Natural killer cell (primary cell): ENCODE measurements at regions of chr7 and their contacts with region 1.

Region 1: DNA sequence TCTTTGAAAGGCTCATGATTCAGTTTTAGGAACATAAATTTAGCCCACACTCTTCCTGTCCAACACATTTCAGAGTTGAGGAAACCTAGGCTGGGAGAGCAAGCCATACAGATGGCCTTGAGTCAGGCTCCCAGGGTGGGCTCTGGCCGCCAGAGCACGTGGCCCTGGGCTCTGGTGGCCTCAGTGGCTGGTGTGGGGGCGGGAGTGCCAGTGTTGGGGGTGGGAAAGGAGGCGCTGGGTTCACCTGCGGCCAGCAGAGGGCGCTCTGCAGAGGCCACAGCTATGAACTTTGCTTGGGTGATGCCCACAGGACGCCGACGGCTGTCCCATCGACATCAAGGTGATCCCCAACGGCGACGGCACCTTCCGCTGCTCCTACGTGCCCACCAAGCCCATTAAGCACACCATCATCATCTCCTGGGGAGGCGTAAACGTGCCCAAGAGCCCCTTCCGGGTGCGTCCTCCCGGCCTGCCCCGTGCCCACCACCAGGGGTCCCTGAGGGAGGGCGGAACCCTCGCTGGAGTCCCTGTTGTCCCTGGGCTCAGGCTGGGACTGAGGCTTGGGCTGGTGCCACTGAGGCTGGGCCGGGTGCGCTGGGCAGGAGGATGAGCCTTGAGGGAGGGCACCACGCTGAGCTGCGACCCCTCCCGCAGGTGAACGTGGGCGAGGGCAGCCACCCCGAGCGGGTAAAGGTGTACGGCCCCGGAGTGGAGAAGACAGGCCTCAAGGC is 11.9 kb downstream of the FLNC start:
- DNase-seq: peak; percentile 51 to 79
- ATAC-seq: peak; percentile 58 to 86 (median 84)
- H3K4me3 ChIP-seq: no peak overlapping the region
- H3K4me3 Mint-ChIP-seq: peak overlapping the region; percentile 50
- H3K27ac ChIP-seq: no peak overlapping the region
- H3K27ac Mint-ChIP-seq: no peak overlapping the region
- H3K4me1 ChIP-seq: peaks cover 3% of the 10 kb centered on the region
- H3K4me1 Mint-ChIP-seq: no peaks in the 10 kb centered on the region
- H3K27me3 ChIP-seq: no peaks in the 10 kb centered on the region
- H3K27me3 Mint-ChIP-seq: no peaks in the 10 kb centered on the region
- CTCF ChIP-seq: peak; percentile 70

Region 2: DNA sequence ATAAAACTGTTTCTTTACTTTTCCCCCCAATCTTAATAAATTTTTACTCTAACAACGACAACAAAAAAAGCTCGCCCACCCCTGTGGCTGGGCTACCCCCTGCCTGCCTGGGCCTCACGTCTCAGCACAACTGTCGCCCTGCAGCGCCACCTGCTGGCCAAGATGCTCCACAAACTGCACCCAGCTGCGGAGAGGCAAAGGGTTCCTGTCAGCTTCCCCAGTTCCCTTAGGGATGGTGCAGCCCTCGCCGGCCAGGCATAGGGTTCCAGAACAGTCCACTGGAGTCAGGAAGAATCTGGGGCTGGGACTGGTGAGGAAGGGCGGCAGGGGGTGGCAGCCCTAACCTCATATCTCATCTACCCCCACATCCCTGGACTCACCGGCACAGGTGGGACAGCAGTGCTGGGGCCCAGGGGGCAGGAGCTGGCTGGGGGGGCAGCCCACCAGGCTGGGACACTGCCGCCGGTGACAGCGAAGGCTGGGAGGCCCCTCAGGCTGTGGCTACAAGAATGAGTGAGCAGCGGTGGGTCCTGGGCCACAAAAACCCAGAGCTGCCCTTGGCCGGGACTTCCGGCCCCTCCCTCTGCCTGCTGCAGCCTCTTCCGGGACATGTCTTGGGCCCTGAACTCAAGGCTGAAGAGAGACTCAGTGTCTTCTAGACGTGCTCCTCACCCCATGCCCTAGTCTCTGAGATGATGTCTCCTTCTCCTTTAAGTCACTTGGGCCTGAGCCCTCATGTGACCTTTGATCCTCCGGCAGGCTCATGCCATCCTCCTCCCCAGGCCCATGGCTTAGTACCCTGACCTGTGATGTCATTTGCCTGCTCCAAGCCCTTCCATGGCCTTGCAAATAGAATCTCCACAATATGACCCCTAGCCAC is 41.8 kb after region 1 on chr7:
- intact Hi-C with region 1: loop called (anchors 5 kb)
- DNase-seq: peak; percentile 82 to 92
- ATAC-seq: peak; percentile 76 to 95 (median 89)
- H3K4me3 ChIP-seq: peak overlapping the region; percentile 26
- H3K4me3 Mint-ChIP-seq: no peak overlapping the region
- H3K27ac ChIP-seq: no peak overlapping the region
- H3K27ac Mint-ChIP-seq: no peak overlapping the region
- H3K4me1 ChIP-seq: no peaks in the 10 kb centered on the region
- H3K4me1 Mint-ChIP-seq: no peaks in the 10 kb centered on the region
- H3K27me3 ChIP-seq: peaks cover 2% of the 10 kb centered on the region
- H3K27me3 Mint-ChIP-seq: peaks cover 0 to 3% of the 10 kb centered on the region in 2 donors
- CTCF ChIP-seq: peak; percentile 96

Region 3: DNA sequence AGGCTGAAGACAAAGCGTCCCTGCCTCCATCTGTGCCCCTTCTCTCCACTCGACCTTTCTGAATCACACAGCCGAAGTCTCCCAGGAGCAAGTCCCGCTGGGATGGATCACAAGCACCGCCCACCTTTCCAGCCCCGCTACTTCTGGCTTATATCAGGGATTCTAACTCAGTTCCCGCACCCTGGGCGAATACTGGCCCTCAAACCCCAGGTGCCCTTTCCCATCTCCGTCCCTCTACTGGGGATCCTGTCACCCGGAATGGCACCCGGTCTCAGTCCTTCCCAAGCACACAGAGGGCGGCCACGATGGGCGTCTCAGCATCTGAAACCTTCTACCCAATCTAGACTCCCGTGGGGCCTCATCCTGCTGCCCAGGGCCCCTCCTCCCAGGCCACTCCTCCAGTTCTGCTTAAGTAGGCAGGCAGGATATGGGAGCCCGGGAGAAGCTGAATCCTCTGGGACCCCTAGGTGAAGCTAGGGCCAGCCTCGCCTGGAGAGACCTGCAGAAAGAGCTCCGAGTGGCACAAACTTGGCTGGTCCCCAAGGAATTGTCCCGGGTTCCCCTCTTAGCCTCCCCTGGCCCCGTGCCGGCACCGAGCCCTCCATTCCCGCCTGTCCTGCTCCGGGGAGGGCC is 67.7 kb after region 1 on chr7:
- intact Hi-C with region 1: no loop called
- DNase-seq: no peak
- ATAC-seq: no peak
- H3K4me3 ChIP-seq: no peak overlapping the region
- H3K4me3 Mint-ChIP-seq: no peak overlapping the region
- H3K27ac ChIP-seq: no peak overlapping the region
- H3K27ac Mint-ChIP-seq: no peak overlapping the region
- H3K4me1 ChIP-seq: peaks cover 8% of the 10 kb centered on the region
- H3K4me1 Mint-ChIP-seq: no peaks in the 10 kb centered on the region
- H3K27me3 ChIP-seq: peaks cover 12% of the 10 kb centered on the region
- H3K27me3 Mint-ChIP-seq: peaks cover 32 to 60% of the 10 kb centered on the region in 2 donors
- CTCF ChIP-seq: no peak

Region 4: GRCh38 chr7:128940494-128941322 is 98.6 kb after region 1 on chr7:
- intact Hi-C with region 1: no loop called
- DNase-seq: peak in 1 of 2 donors; percentile 34
- ATAC-seq: peak; percentile 64 to 75 (median 69)
- H3K4me3 ChIP-seq: peak overlapping the region; percentile 29
- H3K4me3 Mint-ChIP-seq: peak overlapping the region; percentile 84
- H3K27ac ChIP-seq: peak overlapping the region; percentile 79
- H3K27ac Mint-ChIP-seq: peak overlapping the region; percentile 75 to 93
- H3K4me1 ChIP-seq: peaks cover 43% of the 10 kb centered on the region
- H3K4me1 Mint-ChIP-seq: peaks cover 33 to 39% of the 10 kb centered on the region in 2 donors
- H3K27me3 ChIP-seq: no peaks in the 10 kb centered on the region
- H3K27me3 Mint-ChIP-seq: peaks cover 0 to 9% of the 10 kb centered on the region in 2 donors
- CTCF ChIP-seq: no peak